ENCODE measurements at regions of chr9 and their contacts with region 1.

Region 1: DNA sequence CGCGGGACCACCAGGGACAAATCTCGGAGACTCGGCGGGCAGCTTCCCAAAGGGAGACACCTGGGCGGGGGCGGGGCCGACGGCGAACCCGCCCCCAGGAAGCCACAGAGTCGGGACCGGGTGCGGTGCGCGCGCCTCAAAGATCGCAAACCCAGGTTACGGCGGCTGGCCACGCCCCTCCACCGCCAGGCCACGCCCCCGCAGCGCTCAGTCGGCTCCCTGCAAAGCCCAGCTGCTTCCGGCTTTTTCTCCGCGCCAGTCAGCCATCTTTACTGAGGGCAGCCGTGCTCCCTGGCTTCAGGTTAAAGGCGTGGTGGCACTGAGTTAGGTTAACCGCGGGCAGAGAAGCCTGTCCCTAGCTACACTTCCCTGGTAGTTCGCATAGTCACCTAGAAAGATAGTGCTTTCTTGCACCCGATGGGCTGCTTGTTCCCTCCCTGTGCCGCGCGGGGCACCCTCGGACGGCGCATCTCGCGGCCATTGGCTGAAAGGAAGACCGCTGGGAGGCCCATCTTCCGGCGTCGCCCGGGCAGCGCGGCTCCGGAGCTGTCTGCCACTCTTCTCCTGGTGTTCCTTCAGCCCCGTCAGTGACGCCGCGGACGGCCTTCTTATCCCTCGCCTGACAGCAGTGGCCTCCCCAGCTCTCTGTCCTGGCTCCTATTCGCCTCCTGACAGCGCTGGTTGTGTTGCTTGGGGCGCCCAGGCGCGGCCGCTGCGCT is at the start of gene TBC1D2:
- DNase-seq: peak; percentile 93 to 99 (median 96)
- ATAC-seq: peak; percentile 91 to 92 (median 92)
- H3K4me3 ChIP-seq: peak within 1 kb of the TSS; percentile 93 to 97
- H3K4me3 Mint-ChIP-seq: peak within 1 kb of the TSS; percentile 88 to 95 (median 89)
- H3K27ac ChIP-seq: peak within 1 kb of the TSS; percentile 88
- H3K27ac Mint-ChIP-seq: peak within 1 kb of the TSS; percentile 97 to 99
- H3K4me1 ChIP-seq: peaks cover 5 to 23% of the 10 kb centered on the region in 2 experiments
- H3K4me1 Mint-ChIP-seq: peaks cover 33 to 39% (median 33%) of the 10 kb centered on the region in 3 donors
- H3K27me3 ChIP-seq: no peaks in the 10 kb centered on the region
- H3K27me3 Mint-ChIP-seq: no peaks in the 10 kb centered on the region
- total RNA-seq, gene TBC1D2: 4.5 to 10.7 (median 7.1) TPM

Region 2: DNA sequence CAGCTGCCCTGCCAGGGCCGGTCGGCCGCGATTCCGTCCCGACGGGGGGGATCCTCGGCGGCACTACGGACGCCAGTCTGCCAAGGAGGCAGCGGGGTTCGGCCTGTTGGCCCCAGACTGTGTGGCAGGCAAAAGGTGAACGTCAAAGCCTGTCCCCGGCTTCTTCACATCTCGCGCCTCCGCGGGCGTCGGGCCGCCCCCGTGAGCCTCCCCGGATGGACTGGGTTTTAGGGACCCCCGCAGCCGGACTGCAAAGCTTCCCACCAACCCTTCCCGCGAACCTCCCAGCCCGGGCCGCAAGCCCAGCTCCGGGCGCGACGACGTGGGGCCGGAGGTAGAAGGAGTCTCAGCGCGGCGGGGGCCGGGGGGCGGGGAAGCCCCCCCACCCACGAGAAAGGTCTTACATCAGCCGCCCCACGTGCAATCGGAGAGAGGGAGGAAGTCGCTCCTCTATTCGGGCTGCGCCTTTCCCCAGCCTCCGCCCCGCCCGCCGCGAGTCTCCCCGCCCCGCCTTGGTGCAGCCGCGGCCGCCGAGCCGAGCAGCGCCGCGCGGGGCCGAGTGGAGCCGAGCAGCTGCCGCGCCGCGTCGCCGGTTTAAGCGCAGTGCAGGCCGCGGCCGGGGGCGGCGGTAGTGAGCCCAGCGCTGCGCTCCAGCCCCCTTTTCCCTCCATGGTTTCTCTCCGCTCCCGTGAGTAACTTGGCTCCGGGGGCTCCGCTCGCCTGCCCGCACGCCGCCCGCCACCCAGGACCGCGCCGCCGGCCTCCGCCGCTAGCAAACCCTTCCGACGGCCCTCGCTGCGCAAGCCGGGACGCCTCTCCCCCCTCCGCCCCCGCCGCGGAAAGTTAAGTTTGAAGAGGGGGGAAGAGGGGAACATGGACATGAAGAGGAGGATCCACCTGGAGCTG is 272.8 kb before region 1 on chr9 and contains the start of gene ANP32B:
- CTCF ChIA-PET with region 1: interaction called in 1 of 2 experiments, 11 read pairs
- POLR2A ChIA-PET with region 1: no interaction called
- DNase-seq: peak; percentile 88 to 96 (median 92)
- ATAC-seq: peak; percentile 79 to 87 (median 82)
- H3K4me3 ChIP-seq: peak within 1 kb of the TSS; percentile 79 to 82
- H3K4me3 Mint-ChIP-seq: peak within 1 kb of the TSS; percentile 80 to 81 (median 80)
- H3K27ac ChIP-seq: peak within 1 kb of the TSS; percentile 93
- H3K27ac Mint-ChIP-seq: peak within 1 kb of the TSS; percentile 84 to 88
- H3K4me1 ChIP-seq: peaks cover 30 to 61% of the 10 kb centered on the region in 2 experiments
- H3K4me1 Mint-ChIP-seq: peaks cover 55 to 56% (median 56%) of the 10 kb centered on the region in 3 donors
- H3K27me3 ChIP-seq: peaks cover 0 to 4% of the 10 kb centered on the region in 2 experiments
- H3K27me3 Mint-ChIP-seq: no peaks in the 10 kb centered on the region
- total RNA-seq, gene ANP32B: 151 to 201 (median 172) TPM

Region 3: DNA sequence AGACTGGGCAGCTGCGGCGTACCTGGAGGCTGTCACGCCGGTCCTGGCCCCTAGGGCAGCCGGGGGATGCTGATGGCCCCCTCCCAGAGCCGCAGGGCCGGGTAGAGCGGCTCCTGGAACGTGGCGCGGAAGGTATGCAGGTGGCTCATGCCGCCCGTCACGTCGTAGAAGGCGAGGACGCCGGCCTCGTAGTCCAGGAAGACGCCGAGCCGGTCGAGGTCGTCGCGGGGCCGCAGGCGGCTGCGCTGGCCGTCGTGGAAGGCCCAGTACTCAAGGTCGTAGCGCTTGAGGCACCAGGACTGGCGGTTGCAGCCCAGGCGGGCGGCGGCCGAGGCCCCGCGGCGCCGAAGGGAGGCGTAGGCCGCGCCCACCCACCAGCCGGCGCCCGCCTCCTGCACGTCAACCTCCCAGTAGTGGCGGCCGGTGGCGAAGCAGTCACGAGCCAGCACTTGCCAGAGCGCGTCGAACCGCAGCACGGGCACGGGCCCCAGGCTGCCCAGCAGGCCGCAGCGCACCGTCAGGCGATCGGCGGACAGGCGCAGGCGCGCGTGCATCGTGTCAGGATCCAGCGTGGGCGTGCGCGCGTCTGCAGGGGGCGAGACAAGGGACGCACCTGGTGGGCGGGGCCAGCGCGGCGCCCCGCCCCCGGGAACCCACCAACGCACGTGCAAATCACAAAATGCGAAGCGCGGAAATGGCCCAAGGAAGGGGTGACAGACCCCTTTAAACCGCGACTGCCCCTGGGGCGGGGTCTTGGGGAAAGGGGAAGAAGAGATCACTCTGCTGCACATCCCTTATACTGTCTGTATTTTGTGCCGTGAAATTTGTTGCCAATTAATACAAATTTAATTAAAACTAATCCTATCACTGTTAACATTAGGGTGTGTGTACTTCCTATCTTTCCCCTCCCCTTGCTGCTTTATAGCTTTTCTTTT is 168.1 kb before region 1 on chr9:
- CTCF ChIA-PET with region 1: interaction called in 1 of 2 experiments, 3 read pairs
- POLR2A ChIA-PET with region 1: interaction called, 3 to 10 read pairs
- DNase-seq: peak in 19 of 35 experiments; percentile 6 to 50 (median 34)
- ATAC-seq: peak; percentile 45 to 78 (median 58)
- H3K4me3 ChIP-seq: no peak overlapping the region
- H3K4me3 Mint-ChIP-seq: peak overlapping the region in 1 of 3 donors; percentile 61
- H3K27ac ChIP-seq: no peak overlapping the region
- H3K27ac Mint-ChIP-seq: peak overlapping the region in 1 of 2 donors; percentile 81
- H3K4me1 ChIP-seq: peaks cover 0 to 8% of the 10 kb centered on the region in 2 experiments
- H3K4me1 Mint-ChIP-seq: peaks cover 52 to 54% (median 53%) of the 10 kb centered on the region in 3 donors
- H3K27me3 ChIP-seq: no peaks in the 10 kb centered on the region
- H3K27me3 Mint-ChIP-seq: no peaks in the 10 kb centered on the region

Region 4: DNA sequence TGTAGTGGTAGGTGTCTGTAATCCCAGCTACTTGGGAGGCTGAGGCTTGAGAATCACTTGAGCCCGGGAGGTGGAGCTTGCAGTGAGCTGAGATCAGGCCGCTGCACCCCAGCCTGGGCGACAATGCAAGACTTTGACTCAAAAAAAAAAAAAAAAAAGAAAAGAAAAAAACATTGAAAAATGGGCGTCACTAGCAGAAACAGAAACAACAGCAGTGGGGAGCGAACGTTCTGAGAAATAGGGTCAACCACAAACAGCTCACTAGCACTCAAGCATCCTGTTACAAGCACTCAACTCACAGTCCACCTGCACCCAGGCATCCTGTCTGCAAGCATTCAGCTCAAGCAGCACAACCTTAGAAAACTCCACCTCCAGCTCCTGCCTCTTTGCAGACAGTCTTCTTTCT is 153.9 kb before region 1 on chr9:
- CTCF ChIA-PET with region 1: interaction called in 1 of 2 experiments, 10 read pairs
- POLR2A ChIA-PET with region 1: interaction called in 1 of 2 experiments, 5 read pairs
- DNase-seq: peak; percentile 49 to 95 (median 83)
- ATAC-seq: peak; percentile 95 to 97 (median 96)
- H3K4me3 ChIP-seq: peak overlapping the region in 1 of 2 donors; percentile 13
- H3K4me3 Mint-ChIP-seq: peak overlapping the region; percentile 65 to 74 (median 69)
- H3K27ac ChIP-seq: peak overlapping the region; percentile 77
- H3K27ac Mint-ChIP-seq: peak overlapping the region; percentile 95 to 99
- H3K4me1 ChIP-seq: peaks cover 67 to 92% of the 10 kb centered on the region in 2 experiments
- H3K4me1 Mint-ChIP-seq: peaks cover 86 to 95% (median 86%) of the 10 kb centered on the region in 3 donors
- H3K27me3 ChIP-seq: no peaks in the 10 kb centered on the region
- H3K27me3 Mint-ChIP-seq: no peaks in the 10 kb centered on the region

Region 5: DNA sequence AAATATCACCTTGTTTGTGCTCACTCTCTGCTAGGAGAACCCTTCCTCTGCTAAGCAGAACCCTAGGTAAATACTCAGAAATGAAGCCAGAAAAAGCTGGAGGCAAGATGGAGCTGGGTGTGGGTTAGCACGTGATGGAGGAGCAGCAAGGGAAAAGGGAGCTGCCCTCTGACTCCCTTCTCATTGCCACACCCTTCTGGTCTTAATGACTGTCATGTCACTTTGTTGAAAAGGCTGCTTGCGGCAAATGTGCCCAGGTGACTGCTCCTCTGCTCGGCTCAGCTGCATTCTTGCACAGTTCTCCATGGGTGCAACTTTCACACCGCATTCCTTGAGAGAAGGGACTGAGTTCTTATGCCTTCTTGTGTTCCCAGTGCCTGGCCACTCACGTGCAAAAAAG is 36.1 kb after region 1 on chr9:
- CTCF ChIA-PET with region 1: no interaction called
- POLR2A ChIA-PET with region 1: no interaction called
- DNase-seq: no peak
- ATAC-seq: no peak
- H3K4me3 ChIP-seq: no peak overlapping the region
- H3K4me3 Mint-ChIP-seq: no peak overlapping the region
- H3K27ac ChIP-seq: no peak overlapping the region
- H3K27ac Mint-ChIP-seq: no peak overlapping the region
- H3K4me1 ChIP-seq: no peaks in the 10 kb centered on the region
- H3K4me1 Mint-ChIP-seq: no peaks in the 10 kb centered on the region
- H3K27me3 ChIP-seq: peaks cover 0 to 14% of the 10 kb centered on the region in 2 experiments
- H3K27me3 Mint-ChIP-seq: no peaks in the 10 kb centered on the region

Measured in T-cell (primary cell).